ENCODE measurements at regions of chr12 and their contacts with region 1.

Region 1: DNA sequence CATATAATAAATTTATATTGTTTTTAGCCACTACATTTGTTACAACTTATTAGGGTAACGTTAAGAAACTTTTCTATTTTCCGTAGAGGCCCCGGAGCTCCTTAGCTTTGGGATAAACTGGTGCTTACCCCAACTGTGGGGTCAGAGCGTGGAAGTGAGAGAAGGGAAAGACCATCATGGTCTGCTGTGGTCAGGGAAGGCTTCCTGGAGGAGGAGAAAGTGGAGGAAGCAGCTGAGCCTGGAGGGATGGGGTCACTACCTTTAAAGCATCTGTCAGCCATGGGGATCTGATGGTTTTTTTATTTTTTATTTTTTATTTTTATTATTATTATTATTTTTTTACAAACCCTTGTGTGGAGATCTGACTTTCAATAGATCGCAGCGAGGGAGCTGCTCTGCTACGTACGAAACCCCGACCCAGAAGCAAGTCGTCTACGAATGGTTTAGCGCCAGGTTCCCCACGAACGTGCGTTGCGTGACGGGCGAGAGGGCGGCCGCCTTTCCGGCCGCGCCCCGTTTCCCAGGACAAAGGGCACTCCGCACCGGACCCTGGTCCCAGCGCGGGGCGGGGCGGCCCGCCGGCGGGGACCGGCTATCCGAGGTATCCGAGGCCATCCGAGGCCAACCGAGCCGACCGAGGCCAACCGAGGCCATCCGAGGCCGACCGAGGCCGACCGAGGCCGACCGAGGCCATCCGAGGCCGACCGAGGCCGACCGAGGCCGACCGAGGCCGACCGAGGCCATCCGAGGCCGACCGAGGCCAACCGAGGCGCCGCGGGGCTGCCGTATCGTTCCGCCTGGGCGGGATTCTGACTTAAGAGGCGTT is 1101.2 kb upstream of the TMEM132C start:
- DNase-seq: peak; percentile 72 to 92
- H3K4me3 ChIP-seq: peak overlapping the region; percentile 52; the same call in 1 of the 2 replicates
- H3K27ac ChIP-seq: peak overlapping the region; percentile 79
- H3K4me1 ChIP-seq: peaks cover 25% of the 10 kb centered on the region
- H3K27me3 ChIP-seq: no peaks in the 10 kb centered on the region
- CTCF ChIP-seq: no peak

Region 2: GRCh38 chr12:127108360-127109215 is 57.2 kb before region 1 on chr12:
- CTCF ChIA-PET with region 1: interaction called, 5 read pairs
- POLR2A ChIA-PET with region 1: interaction called, 5 read pairs
- intact Hi-C with region 1: loop called (anchors 5 kb)
- DNase-seq: peak; percentile 44 to 50
- H3K4me3 ChIP-seq: no peak overlapping the region
- H3K27ac ChIP-seq: no peak overlapping the region
- H3K4me1 ChIP-seq: peaks cover 12% of the 10 kb centered on the region
- H3K27me3 ChIP-seq: no peaks in the 10 kb centered on the region
- CTCF ChIP-seq: peak; percentile 74

Region 3: DNA sequence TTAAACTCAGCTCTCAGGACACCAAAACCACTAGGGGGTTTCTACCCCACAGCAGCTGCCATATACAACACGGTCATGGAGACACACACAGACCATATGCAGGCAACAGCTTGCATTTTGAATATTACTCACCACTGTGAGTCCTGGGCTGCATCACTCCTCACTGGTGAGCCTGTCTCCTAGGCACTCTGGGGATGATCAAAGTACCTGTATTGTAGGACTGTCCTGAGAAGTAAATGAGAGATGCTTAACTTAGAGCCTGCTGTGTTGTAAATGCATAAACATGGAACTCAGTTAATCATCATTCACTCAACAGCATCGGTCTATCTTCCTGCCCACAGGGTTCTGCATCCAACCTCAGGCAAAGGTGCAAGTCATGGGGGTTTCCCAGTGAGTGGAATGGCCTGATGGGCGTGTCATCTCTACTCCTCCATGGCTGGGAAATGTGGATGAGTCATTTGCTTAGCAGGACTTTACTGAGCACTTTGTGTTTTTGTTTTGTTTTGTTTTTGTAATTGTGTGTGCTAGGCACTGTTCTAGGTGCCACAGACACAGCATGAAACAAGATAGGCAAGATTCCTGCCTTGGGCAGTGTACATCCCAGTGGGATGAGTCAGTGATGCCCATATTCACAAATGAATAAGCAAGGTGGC is 40.0 kb before region 1 on chr12:
- CTCF ChIA-PET with region 1: interaction called, 3 read pairs
- POLR2A ChIA-PET with region 1: interaction called, 3 read pairs
- intact Hi-C with region 1: loop called (anchors 1 kb)
- DNase-seq: peak; percentile 86 to 100
- H3K4me3 ChIP-seq: no peak overlapping the region
- H3K27ac ChIP-seq: peak overlapping the region; percentile 94
- H3K4me1 ChIP-seq: peaks cover 32% of the 10 kb centered on the region
- H3K27me3 ChIP-seq: no peaks in the 10 kb centered on the region
- CTCF ChIP-seq: no peak

Region 4: GRCh38 chr12:127516467-127516866 is 350.7 kb after region 1 on chr12:
- CTCF ChIA-PET with region 1: no interaction called
- POLR2A ChIA-PET with region 1: interaction called, 21 read pairs
- intact Hi-C with region 1: no loop called
- DNase-seq: no peak
- H3K4me3 ChIP-seq: no peak overlapping the region
- H3K27ac ChIP-seq: no peak overlapping the region
- H3K4me1 ChIP-seq: no peaks in the 10 kb centered on the region
- H3K27me3 ChIP-seq: no peaks in the 10 kb centered on the region
- CTCF ChIP-seq: no peak

Region 5: DNA sequence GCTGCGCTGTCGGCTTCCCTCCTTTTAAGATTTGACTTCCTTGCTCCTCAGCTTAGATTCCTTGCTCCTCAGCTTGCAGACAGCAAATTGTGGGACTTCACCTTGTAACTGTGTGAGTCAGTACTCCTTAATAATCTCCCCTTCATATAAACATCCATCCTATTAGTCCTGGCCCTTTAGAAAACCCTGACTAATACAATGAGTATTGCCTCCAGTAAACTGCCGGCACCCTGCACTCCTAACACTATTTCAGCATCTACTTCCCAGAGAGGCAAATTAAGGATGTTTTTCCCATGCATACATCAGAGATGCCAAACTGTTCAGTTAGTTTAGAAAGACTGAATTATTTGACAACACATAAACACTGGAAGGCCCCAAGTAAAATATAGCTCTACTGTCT is 489.9 kb after region 1 on chr12:
- CTCF ChIA-PET with region 1: no interaction called
- POLR2A ChIA-PET with region 1: no interaction called
- intact Hi-C with region 1: no loop called
- DNase-seq: no peak
- H3K4me3 ChIP-seq: no peak overlapping the region
- H3K27ac ChIP-seq: no peak overlapping the region
- H3K4me1 ChIP-seq: no peaks in the 10 kb centered on the region
- H3K27me3 ChIP-seq: peaks cover 19% of the 10 kb centered on the region
- CTCF ChIP-seq: no peak

Region 6: DNA sequence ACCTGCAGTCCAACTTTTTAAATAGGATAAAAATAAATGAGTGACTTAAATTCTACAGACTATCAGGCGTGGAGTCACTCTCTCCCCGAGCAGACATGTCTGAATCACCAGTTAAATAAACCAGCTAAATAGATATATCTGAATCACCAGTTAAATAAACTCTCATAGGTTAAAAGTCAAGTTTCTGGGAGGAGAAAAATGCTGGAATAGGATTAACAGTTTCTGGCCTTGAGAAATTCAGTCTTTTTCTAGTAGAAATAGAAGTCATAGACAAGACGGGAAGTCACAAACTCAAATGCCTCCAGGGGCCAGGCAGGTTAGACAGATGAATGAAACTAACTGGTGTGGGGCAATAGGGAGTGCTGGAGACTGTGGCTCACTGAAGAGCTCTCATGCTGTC is 842.6 kb after region 1 on chr12:
- CTCF ChIA-PET with region 1: no interaction called
- POLR2A ChIA-PET with region 1: no interaction called
- intact Hi-C with region 1: no loop called
- DNase-seq: no peak
- H3K4me3 ChIP-seq: no peak overlapping the region
- H3K27ac ChIP-seq: no peak overlapping the region
- H3K4me1 ChIP-seq: no peaks in the 10 kb centered on the region
- H3K27me3 ChIP-seq: peaks cover 34% of the 10 kb centered on the region; the same call in 1 of the 2 replicates
- CTCF ChIP-seq: no peak

Measured in PC-9 (cell line).